Activated naive CD4-positive, alpha-beta T cell treated with anti-CD3 and anti-CD28 coated beads for 36 hours (primary cell): ENCODE measurements at regions of chr9 and their contacts with region 1.

Region 1: DNA sequence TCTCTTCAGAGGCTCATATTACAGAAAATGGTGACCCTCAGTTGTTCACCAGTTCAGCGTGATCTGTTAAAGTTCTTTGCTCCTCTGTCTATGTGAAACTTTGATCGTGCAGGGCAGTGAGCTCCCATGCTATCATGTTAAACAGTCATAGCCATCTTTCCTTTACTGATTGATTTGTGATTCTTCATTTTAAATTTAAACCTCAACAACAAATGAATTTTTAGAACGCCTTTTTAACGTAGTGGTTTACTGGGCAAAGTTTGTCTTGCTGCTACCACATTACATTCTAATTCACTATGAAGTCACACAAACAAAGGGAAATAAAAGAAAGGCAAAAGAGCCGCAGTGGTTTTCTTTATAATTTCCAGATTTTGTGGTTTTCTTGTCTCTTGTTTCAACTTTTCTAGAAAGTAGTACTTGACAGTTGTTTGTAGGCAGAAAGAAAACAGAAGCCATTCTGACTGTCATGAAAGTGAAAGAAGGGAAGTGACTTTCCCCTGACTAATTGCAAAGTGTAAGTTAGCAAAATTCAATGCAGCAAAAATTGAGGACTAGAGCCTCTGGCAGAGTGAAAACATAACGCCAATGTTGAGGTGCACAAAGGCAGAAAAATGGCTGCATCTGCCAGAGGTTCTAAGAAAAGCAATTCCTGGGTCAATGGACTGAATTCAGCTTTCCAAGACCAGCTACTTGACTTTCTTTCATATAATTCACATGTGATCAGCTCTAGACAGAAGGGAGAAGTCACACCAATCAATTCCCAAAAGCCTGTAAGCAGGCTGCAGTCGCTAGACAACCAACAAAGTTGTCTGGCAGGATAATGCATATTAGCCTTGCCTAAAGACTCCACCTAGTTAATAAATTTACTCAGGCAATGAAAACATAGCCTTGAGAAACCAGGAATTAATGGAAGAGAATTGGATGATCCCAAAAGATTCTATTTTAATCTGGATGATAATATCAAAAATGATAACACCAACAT is 7.1 kb upstream of the IFNA6 start:
- DNase-seq: peak; percentile 28
- H3K4me3 Mint-ChIP-seq: peak overlapping the region; percentile 36
- H3K27ac Mint-ChIP-seq: no peak overlapping the region
- H3K4me1 Mint-ChIP-seq: peaks cover 19% of the 10 kb centered on the region
- H3K27me3 Mint-ChIP-seq: peaks cover 13% of the 10 kb centered on the region

Region 2: DNA sequence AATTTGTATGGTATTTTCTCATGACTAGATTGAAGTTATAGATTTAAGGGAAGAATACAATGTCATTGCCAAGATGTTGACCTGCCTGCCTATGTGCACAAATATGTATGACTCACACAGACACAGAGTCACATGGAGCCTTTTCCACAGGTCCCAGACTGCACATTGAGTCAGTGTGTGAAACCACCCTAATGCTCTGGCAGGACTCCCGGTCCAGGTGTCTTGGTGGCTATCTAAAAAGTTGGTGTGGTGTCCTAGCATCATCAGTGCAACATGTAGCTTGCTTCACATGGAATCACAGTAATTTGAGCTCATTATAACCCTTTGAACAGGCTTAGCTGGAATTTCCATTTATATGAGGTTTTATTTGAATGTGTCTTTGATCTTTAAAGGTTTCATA is 63.4 kb before region 1 on chr9:
- CTCF ChIA-PET with region 1: no interaction called
- intact Hi-C with region 1: no loop called
- DNase-seq: peak; percentile 9
- H3K4me3 Mint-ChIP-seq: no peak overlapping the region
- H3K27ac Mint-ChIP-seq: no peak overlapping the region
- H3K4me1 Mint-ChIP-seq: peaks cover 8% of the 10 kb centered on the region
- H3K27me3 Mint-ChIP-seq: peaks cover 12% of the 10 kb centered on the region

Region 3: GRCh38 chr9:21334701-21335632 is 22.8 kb before region 1 on chr9 and contains the start of gene KLHL9:
- CTCF ChIA-PET with region 1: interaction called, 4 read pairs
- intact Hi-C with region 1: loop called (anchors 1 kb)
- DNase-seq: peak; percentile 93
- H3K4me3 Mint-ChIP-seq: peak within 1 kb of the TSS; percentile 84
- H3K27ac Mint-ChIP-seq: peak within 1 kb of the TSS; percentile 91
- H3K4me1 Mint-ChIP-seq: peaks cover 48% of the 10 kb centered on the region
- H3K27me3 Mint-ChIP-seq: no peaks in the 10 kb centered on the region
- total RNA-seq, gene KLHL9: 17.5 to 18.3 TPM

Region 4: GRCh38 chr9:21443849-21444625 is 86.3 kb after region 1 on chr9:
- CTCF ChIA-PET with region 1: no interaction called
- intact Hi-C with region 1: loop called (anchors 1 kb)
- DNase-seq: peak; percentile 28
- H3K4me3 Mint-ChIP-seq: peak overlapping the region; percentile 13
- H3K27ac Mint-ChIP-seq: no peak overlapping the region
- H3K4me1 Mint-ChIP-seq: peaks cover 13% of the 10 kb centered on the region
- H3K27me3 Mint-ChIP-seq: no peaks in the 10 kb centered on the region

Region 5: GRCh38 chr9:21688108-21689102 is 330.6 kb after region 1 on chr9:
- CTCF ChIA-PET with region 1: no interaction called
- intact Hi-C with region 1: loop called (anchors 1 kb)
- DNase-seq: no peak
- H3K4me3 Mint-ChIP-seq: no peak overlapping the region
- H3K27ac Mint-ChIP-seq: peak overlapping the region; percentile 17
- H3K4me1 Mint-ChIP-seq: peaks cover 64% of the 10 kb centered on the region
- H3K27me3 Mint-ChIP-seq: no peaks in the 10 kb centered on the region

Region 6: DNA sequence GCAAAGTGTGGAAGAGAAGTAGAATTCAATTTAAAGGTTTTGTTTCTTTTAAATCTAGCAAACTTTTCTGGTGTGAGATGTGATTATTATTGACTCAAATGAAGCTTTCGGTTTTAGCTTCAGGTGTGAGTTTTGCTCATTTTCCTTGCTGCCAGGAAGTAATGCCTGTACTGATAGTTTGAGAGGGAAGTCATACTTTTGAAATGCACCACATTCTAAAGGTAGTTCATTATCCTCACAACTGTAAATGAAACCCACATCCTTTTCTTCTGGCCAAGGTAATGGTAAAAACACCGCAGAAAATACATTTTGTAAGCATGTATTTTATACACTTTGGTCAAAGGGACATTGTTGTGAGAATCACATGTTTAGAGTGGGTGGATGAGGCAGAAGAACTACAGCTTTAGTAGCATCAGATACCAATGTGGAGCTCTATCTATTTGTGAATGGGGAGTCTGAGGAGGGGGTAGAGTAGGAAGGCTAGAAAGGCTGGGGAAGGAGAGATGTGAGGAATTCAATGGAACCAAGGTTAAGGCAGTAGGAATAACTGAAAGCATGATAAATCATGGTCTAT is 818.3 kb after region 1 on chr9:
- CTCF ChIA-PET with region 1: no interaction called
- intact Hi-C with region 1: loop called (anchors 1 kb)
- DNase-seq: peak; percentile 16
- H3K4me3 Mint-ChIP-seq: no peak overlapping the region
- H3K27ac Mint-ChIP-seq: no peak overlapping the region
- H3K4me1 Mint-ChIP-seq: peaks cover 10% of the 10 kb centered on the region
- H3K27me3 Mint-ChIP-seq: peaks cover 34% of the 10 kb centered on the region

Region 7: DNA sequence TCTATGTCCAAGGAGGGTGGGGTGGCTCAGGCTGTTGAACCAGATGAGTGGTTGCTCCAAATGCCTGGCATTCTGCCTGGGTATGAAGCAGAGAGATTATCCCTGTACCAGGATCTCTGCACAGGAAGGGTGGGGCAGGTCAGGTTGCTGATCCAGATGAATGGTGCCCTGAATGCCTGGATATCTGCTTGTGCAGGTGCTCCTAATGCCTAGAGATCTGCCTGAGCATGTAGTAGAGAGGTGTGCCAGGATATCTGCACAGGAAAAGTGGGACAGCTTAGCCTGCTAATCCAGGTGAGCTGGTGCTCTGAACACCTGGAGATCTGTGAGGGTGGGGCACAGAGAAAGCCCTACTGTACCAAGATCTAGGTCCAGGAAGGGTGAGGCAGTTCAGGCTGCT is 899.3 kb after region 1 on chr9:
- CTCF ChIA-PET with region 1: no interaction called
- intact Hi-C with region 1: no loop called
- DNase-seq: no peak
- H3K4me3 Mint-ChIP-seq: no peak overlapping the region
- H3K27ac Mint-ChIP-seq: no peak overlapping the region
- H3K4me1 Mint-ChIP-seq: no peaks in the 10 kb centered on the region
- H3K27me3 Mint-ChIP-seq: peaks cover 9% of the 10 kb centered on the region